Caco-2 (cell line): ENCODE measurements at regions of chr12 and their contacts with region 1.

Region 1: DNA sequence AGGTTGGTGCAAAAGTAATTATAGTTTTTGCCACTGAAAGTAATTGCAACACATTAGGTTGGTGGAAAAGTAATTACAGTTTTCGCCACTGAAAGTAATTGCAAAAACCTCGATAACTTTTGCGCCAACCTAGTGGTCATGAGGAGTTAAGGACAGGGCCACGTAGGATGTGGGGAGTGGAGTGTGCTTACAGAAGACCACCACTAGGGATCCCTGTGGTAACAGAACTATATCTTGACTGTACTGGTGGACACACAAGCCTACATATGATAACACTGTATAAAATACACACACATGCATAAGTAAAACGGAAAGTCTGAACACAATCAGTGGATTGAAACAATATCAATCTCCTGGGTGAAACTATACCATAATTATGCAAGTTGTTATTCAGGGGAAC is 187.4 kb upstream of the ABCD2 start:
- DNase-seq: peak; percentile 30 to 36
- H3K4me3 ChIP-seq: no peak overlapping the region
- H3K4me3 Mint-ChIP-seq: no peak overlapping the region
- H3K27ac Mint-ChIP-seq: no peak overlapping the region
- H3K4me1 ChIP-seq: no peaks in the 10 kb centered on the region
- H3K4me1 Mint-ChIP-seq: no peaks in the 10 kb centered on the region
- H3K27me3 ChIP-seq: no peaks in the 10 kb centered on the region
- H3K27me3 Mint-ChIP-seq: no peaks in the 10 kb centered on the region
- CTCF ChIP-seq: peak; percentile 32 to 49

Region 2: GRCh38 chr12:39958377-39958776 is 151.3 kb after region 1 on chr12:
- CTCF ChIA-PET with region 1: no interaction called
- POLR2A ChIA-PET with region 1: no interaction called
- intact Hi-C with region 1: loop called (anchors 1 kb)
- DNase-seq: peak in 1 of 2 experiments; percentile 32
- H3K4me3 ChIP-seq: no peak overlapping the region
- H3K4me3 Mint-ChIP-seq: no peak overlapping the region
- H3K27ac Mint-ChIP-seq: no peak overlapping the region
- H3K4me1 ChIP-seq: no peaks in the 10 kb centered on the region
- H3K4me1 Mint-ChIP-seq: no peaks in the 10 kb centered on the region
- H3K27me3 ChIP-seq: no peaks in the 10 kb centered on the region
- H3K27me3 Mint-ChIP-seq: peaks cover 3% of the 10 kb centered on the region
- CTCF ChIP-seq: peak; percentile 55 to 67

Region 3: GRCh38 chr12:39990122-39991101 is 183.4 kb after region 1 on chr12:
- CTCF ChIA-PET with region 1: no interaction called
- POLR2A ChIA-PET with region 1: no interaction called
- intact Hi-C with region 1: loop called (anchors 2 kb)
- DNase-seq: peak; percentile 39 to 62
- H3K4me3 ChIP-seq: no peak overlapping the region
- H3K4me3 Mint-ChIP-seq: no peak overlapping the region
- H3K27ac Mint-ChIP-seq: no peak overlapping the region
- H3K4me1 ChIP-seq: no peaks in the 10 kb centered on the region
- H3K4me1 Mint-ChIP-seq: no peaks in the 10 kb centered on the region
- H3K27me3 ChIP-seq: no peaks in the 10 kb centered on the region
- H3K27me3 Mint-ChIP-seq: no peaks in the 10 kb centered on the region
- CTCF ChIP-seq: peak; percentile 78 to 88

Region 4: DNA sequence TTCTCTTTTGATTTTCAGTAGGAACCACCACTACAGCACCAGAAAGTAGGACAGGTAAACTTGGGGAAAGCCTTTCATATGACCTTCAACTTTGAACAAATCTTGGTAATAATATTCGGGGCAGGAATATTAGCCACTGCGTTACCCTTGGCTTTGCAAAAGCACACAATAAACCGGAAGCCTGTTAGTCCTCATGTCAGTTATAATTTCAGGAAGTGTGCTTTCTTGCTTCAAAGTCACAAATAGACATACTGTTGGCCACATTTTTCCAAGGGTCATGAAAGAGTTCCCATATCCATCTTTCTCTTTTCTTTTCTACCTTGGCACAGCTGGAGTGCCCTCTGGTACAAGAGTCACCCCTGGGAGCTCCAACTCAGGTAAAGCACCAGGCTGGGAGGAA is 718.0 kb after region 1 on chr12:
- CTCF ChIA-PET with region 1: no interaction called
- POLR2A ChIA-PET with region 1: no interaction called
- intact Hi-C with region 1: no loop called
- DNase-seq: no peak
- H3K4me3 ChIP-seq: no peak overlapping the region
- H3K4me3 Mint-ChIP-seq: no peak overlapping the region
- H3K27ac Mint-ChIP-seq: no peak overlapping the region
- H3K4me1 ChIP-seq: no peaks in the 10 kb centered on the region
- H3K4me1 Mint-ChIP-seq: no peaks in the 10 kb centered on the region
- H3K27me3 ChIP-seq: no peaks in the 10 kb centered on the region
- H3K27me3 Mint-ChIP-seq: peaks cover 2% of the 10 kb centered on the region
- CTCF ChIP-seq: no peak